CD8-positive, alpha-beta T cell (primary cell): ENCODE measurements at regions of chr5 and their contacts with region 1.

Region 1: GRCh38 chr5:170338933-170339779 is 41.6 kb upstream of the LCP2 start:
- DNase-seq: peak; percentile 39 to 88 (median 69)
- ATAC-seq: peak; percentile 65
- H3K4me3 ChIP-seq: no peak overlapping the region
- H3K4me3 Mint-ChIP-seq: no peak overlapping the region
- H3K27ac ChIP-seq: no peak overlapping the region
- H3K27ac Mint-ChIP-seq: peak overlapping the region; percentile 85
- H3K4me1 ChIP-seq: peaks cover 49% of the 10 kb centered on the region
- H3K4me1 Mint-ChIP-seq: peaks cover 39% of the 10 kb centered on the region
- H3K27me3 ChIP-seq: no peaks in the 10 kb centered on the region
- H3K27me3 Mint-ChIP-seq: no peaks in the 10 kb centered on the region
- CTCF ChIP-seq: peak; percentile 68

Region 2: GRCh38 chr5:170100066-170100943 is 238.9 kb before region 1 on chr5:
- CTCF ChIA-PET with region 1: interaction called, 14 read pairs
- POLR2A ChIA-PET with region 1: no interaction called
- intact Hi-C with region 1: no loop called
- DNase-seq: peak; percentile 50 to 80 (median 70)
- ATAC-seq: peak; percentile 56
- H3K4me3 ChIP-seq: no peak overlapping the region
- H3K4me3 Mint-ChIP-seq: no peak overlapping the region
- H3K27ac ChIP-seq: no peak overlapping the region
- H3K27ac Mint-ChIP-seq: no peak overlapping the region
- H3K4me1 ChIP-seq: no peaks in the 10 kb centered on the region
- H3K4me1 Mint-ChIP-seq: peaks cover 2% of the 10 kb centered on the region
- H3K27me3 ChIP-seq: peaks cover 0 to 5% of the 10 kb centered on the region in 2 experiments
- H3K27me3 Mint-ChIP-seq: peaks cover 22% of the 10 kb centered on the region
- CTCF ChIP-seq: peak; percentile 50

Region 3: DNA sequence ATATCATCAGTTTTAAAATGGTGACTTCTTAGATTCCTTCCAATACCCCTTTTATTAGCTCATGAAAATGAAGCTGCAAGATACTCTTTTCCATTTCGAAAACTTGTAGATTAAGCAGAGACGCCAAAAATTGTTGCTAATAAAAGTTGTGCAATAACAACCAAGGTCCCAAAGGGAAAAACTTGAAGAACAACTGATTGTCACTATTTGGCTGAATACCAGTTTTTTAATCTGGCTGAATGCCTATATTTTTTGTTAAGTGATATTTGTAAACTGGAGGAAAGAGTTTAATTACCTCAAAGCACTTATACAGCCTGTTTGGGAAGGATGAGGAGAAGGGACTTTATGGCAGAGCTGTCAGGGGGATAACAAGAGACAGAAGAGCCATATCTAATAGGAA is 91.8 kb before region 1 on chr5:
- CTCF ChIA-PET with region 1: interaction called, 20 read pairs
- POLR2A ChIA-PET with region 1: interaction called, 4 read pairs
- intact Hi-C with region 1: no loop called
- DNase-seq: no peak
- ATAC-seq: no peak
- H3K4me3 ChIP-seq: no peak overlapping the region
- H3K4me3 Mint-ChIP-seq: no peak overlapping the region
- H3K27ac ChIP-seq: no peak overlapping the region
- H3K27ac Mint-ChIP-seq: peak overlapping the region; percentile 41
- H3K4me1 ChIP-seq: peaks cover 8% of the 10 kb centered on the region
- H3K4me1 Mint-ChIP-seq: peaks cover 32% of the 10 kb centered on the region
- H3K27me3 ChIP-seq: no peaks in the 10 kb centered on the region
- H3K27me3 Mint-ChIP-seq: no peaks in the 10 kb centered on the region
- CTCF ChIP-seq: no peak

Region 4: GRCh38 chr5:170267431-170268152 is 71.6 kb before region 1 on chr5:
- CTCF ChIA-PET with region 1: interaction called, 342 read pairs
- POLR2A ChIA-PET with region 1: interaction called, 33 read pairs
- intact Hi-C with region 1: loop called (anchors 1 kb)
- DNase-seq: peak; percentile 65 to 93 (median 86)
- ATAC-seq: peak; percentile 52
- H3K4me3 ChIP-seq: peak overlapping the region in 1 of 2 experiments; percentile 9
- H3K4me3 Mint-ChIP-seq: peak overlapping the region; percentile 69
- H3K27ac ChIP-seq: peak overlapping the region; percentile 8 to 77
- H3K27ac Mint-ChIP-seq: peak overlapping the region; percentile 98
- H3K4me1 ChIP-seq: peaks cover 90% of the 10 kb centered on the region
- H3K4me1 Mint-ChIP-seq: peaks cover 96% of the 10 kb centered on the region
- H3K27me3 ChIP-seq: no peaks in the 10 kb centered on the region
- H3K27me3 Mint-ChIP-seq: no peaks in the 10 kb centered on the region
- CTCF ChIP-seq: peak; percentile 87

Region 5: DNA sequence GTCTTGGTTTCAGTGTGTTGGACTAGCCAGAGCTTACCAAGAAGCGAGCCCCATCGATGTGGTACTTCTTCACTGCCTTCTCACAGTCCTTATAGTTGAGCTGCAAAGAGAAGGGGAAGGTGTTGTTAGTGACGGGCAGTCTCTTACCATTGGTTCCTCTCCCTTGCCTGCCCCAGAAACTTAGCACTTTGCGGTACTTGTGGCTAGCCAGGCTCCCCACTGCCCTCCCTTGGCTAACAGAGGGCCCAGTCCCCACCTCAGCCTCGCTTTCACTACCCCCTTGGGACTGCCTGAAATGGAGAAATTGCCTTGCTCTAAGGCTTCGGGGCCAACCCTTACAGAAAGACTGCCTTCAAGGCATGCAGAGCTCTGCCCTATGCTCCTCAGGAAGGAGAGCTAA is 45.9 kb before region 1 on chr5:
- CTCF ChIA-PET with region 1: interaction called, 192 read pairs
- POLR2A ChIA-PET with region 1: interaction called, 112 read pairs
- intact Hi-C with region 1: loop called (anchors 2 kb)
- DNase-seq: peak in 6 of 9 experiments; percentile 53 to 86 (median 72)
- ATAC-seq: peak; percentile 29
- H3K4me3 ChIP-seq: peak overlapping the region; percentile 87 to 94
- H3K4me3 Mint-ChIP-seq: peak overlapping the region; percentile 99
- H3K27ac ChIP-seq: peak overlapping the region in 1 of 2 experiments; percentile 86
- H3K27ac Mint-ChIP-seq: peak overlapping the region; percentile 97
- H3K4me1 ChIP-seq: peaks cover 73% of the 10 kb centered on the region
- H3K4me1 Mint-ChIP-seq: peaks cover 82% of the 10 kb centered on the region
- H3K27me3 ChIP-seq: no peaks in the 10 kb centered on the region
- H3K27me3 Mint-ChIP-seq: no peaks in the 10 kb centered on the region
- CTCF ChIP-seq: no peak

Region 6: GRCh38 chr5:170420780-170421412 is 81.7 kb after region 1 on chr5:
- CTCF ChIA-PET with region 1: interaction called, 31 read pairs
- POLR2A ChIA-PET with region 1: no interaction called
- intact Hi-C with region 1: loop called in 1 of 2 experiments (anchors 2 kb)
- DNase-seq: peak; percentile 22 to 75 (median 48)
- ATAC-seq: peak; percentile 58
- H3K4me3 ChIP-seq: no peak overlapping the region
- H3K4me3 Mint-ChIP-seq: no peak overlapping the region
- H3K27ac ChIP-seq: no peak overlapping the region
- H3K27ac Mint-ChIP-seq: no peak overlapping the region
- H3K4me1 ChIP-seq: peaks cover 18% of the 10 kb centered on the region
- H3K4me1 Mint-ChIP-seq: peaks cover 25% of the 10 kb centered on the region
- H3K27me3 ChIP-seq: no peaks in the 10 kb centered on the region
- H3K27me3 Mint-ChIP-seq: no peaks in the 10 kb centered on the region
- CTCF ChIP-seq: peak; percentile 79